Activated CD4-positive, alpha-beta memory T cell treated with anti-CD3 and anti-CD28 coated beads for 36 hours (primary cell): ENCODE measurements at regions of chr21 and their contacts with region 1.

Region 1: DNA sequence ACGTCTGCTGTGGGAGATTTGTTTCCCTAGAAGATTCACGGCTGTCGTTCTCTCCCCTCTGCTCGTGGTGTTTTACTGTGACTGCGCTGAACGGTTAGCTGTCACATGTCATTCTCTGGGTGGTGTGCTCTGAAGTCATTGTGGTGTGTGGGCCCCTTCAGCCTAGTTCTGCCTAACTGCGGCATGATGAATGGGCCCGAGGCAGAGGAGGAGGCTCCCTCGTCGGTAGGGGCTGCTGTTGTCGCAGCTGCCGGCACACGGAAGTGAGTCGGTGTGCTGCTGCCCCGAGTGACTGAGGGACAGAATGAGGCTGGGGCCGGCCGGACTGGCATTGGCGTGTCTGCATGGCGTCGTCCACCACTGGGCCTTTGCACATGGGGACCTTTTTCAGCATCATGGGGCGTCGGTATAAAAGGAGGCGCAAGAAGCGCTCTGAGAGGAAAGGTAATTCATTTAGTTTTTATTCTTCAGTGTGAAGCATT is 77.9 kb downstream of the ADARB1 start:
- DNase-seq: peak; percentile 78
- H3K4me3 Mint-ChIP-seq: no peak overlapping the region
- H3K27ac Mint-ChIP-seq: no peak overlapping the region
- H3K4me1 Mint-ChIP-seq: peaks cover 35% of the 10 kb centered on the region
- H3K27me3 Mint-ChIP-seq: no peaks in the 10 kb centered on the region

Region 2: GRCh38 chr21:45439161-45439872 is 287.0 kb after region 1 on chr21:
- CTCF ChIA-PET with region 1: no interaction called
- POLR2A ChIA-PET with region 1: no interaction called
- intact Hi-C with region 1: loop called (anchors 5 kb)
- DNase-seq: peak; percentile 88
- H3K4me3 Mint-ChIP-seq: peak overlapping the region; percentile 37
- H3K27ac Mint-ChIP-seq: no peak overlapping the region
- H3K4me1 Mint-ChIP-seq: peaks cover 6% of the 10 kb centered on the region
- H3K27me3 Mint-ChIP-seq: peaks cover 7% of the 10 kb centered on the region